ENCODE measurements at regions of chr1 and their contacts with region 1.

Region 1: GRCh38 chr1:154558575-154559465 is at the start of gene UBE2Q1:
- DNase-seq: peak; percentile 97
- H3K4me3 ChIP-seq: peak within 1 kb of the TSS; percentile 54 to 74 (median 68)
- H3K27ac ChIP-seq: peak within 1 kb of the TSS; percentile 70
- H3K4me1 ChIP-seq: peaks cover 18% of the 10 kb centered on the region
- H3K27me3 ChIP-seq: no peaks in the 10 kb centered on the region
- CTCF ChIP-seq: no peak
- total RNA-seq, gene UBE2Q1: 31.2 to 80.1 TPM

Region 2: GRCh38 chr1:154324669-154325582 is 233.9 kb before region 1 on chr1 and contains the start of gene ATP8B2:
- CTCF ChIA-PET with region 1: no interaction called
- dilution Hi-C with region 1: no loop called
- in situ Hi-C with region 1: no loop called
- intact Hi-C with region 1: loop called (anchors 5 kb)
- DNase-seq: peak; percentile 53
- H3K4me3 ChIP-seq: peak within 1 kb of the TSS; percentile 55 to 65 (median 63)
- H3K27ac ChIP-seq: no peak within 1 kb of the TSS
- H3K4me1 ChIP-seq: peaks cover 29% of the 10 kb centered on the region
- H3K27me3 ChIP-seq: no peaks in the 10 kb centered on the region
- CTCF ChIP-seq: peak; percentile 79 to 92
- total RNA-seq, gene ATP8B2: 11.5 TPM

Region 3: DNA sequence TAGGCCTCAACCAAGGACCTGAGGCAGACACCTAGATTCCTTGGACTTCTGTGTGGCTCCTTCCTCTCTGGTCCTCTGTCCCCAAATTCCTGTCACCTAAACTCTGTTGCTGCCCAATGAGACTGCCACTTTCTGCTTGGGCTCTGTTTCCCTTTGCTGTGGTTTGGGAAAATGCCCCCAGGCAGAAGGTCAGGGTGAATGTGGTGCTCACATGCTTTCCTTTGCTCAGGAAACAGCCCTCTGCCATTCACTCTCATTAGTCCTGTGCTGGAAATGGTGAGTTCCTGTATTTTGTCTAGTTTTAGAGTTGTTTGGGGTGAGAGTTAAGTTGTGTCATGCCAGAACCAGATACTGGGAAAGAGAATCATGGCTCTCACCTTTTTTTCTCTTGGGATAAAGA is 33.9 kb before region 1 on chr1:
- CTCF ChIA-PET with region 1: no interaction called
- dilution Hi-C with region 1: no loop called
- in situ Hi-C with region 1: no loop called
- intact Hi-C with region 1: no loop called
- DNase-seq: no peak
- H3K4me3 ChIP-seq: no peak overlapping the region
- H3K27ac ChIP-seq: no peak overlapping the region
- H3K4me1 ChIP-seq: no peaks in the 10 kb centered on the region
- H3K27me3 ChIP-seq: no peaks in the 10 kb centered on the region
- CTCF ChIP-seq: no peak

Region 4: DNA sequence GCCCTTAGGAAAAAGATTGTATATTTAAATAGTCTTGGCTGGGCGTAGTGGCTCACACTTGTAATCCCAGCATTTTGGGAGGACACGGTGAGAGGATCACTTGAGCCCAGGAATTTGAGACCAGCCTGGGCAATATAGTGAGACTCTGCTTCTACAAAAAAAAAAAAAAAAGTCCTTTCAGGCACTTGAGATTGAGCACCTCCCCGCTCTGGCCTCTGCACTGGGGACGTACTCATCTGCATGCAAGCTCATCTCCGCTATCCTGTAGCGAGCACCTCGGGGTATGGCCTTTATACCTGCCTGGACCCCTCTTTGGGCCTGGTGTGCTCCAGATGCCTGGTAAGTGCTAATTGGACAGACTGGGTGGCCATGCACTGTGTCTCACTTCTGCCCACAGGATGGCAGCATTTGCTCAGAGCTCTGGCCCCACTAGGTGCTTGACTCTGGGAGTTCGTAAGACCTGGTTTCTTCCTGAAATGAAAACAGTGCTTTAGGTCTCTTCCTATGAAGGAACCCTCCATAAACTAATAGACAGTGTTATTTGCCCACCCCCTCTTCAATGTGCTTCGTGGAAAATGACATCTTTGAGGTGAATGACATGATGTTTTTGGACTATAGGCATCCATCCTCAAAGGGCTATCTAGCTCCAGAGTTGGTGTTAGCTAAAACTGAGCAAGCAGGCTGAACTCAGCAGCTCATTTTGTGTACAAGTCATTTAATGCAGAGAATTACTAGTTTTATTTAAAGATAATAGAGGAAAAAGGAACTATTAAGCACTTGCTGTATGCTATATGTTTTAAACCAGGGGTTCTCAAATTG is 110.9 kb after region 1 on chr1:
- CTCF ChIA-PET with region 1: interaction called, 3 read pairs
- dilution Hi-C with region 1: no loop called
- in situ Hi-C with region 1: no loop called
- intact Hi-C with region 1: loop called (anchors 1 kb)
- DNase-seq: peak; percentile 57
- H3K4me3 ChIP-seq: no peak overlapping the region
- H3K27ac ChIP-seq: no peak overlapping the region
- H3K4me1 ChIP-seq: no peaks in the 10 kb centered on the region
- H3K27me3 ChIP-seq: no peaks in the 10 kb centered on the region
- CTCF ChIP-seq: peak; percentile 89 to 93

Region 5: DNA sequence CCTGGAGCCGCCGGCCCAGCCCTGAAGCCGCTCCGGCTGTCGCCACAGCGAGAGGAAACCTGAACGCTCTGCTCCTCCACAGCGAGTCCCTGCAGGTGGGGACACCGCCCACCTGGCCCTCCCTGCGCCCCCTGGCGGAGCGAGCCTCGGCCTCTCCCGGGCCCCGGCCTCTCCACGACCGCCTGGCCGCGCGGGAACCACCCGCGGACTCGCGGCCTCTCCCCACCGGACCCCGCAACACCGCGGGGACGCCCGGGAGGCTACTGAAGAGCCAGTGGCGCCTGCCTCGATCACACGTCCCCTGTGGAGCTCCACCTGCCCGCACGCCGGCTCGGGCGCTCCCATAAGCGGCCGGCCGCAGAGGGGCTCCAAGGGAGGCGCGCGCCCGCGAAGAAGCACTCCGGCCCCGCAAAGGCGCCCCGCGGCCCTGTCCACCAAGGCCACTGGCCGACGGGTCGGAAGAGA is 201.7 kb after region 1 on chr1:
- CTCF ChIA-PET with region 1: interaction called, 3 read pairs
- dilution Hi-C with region 1: no loop called
- in situ Hi-C with region 1: no loop called
- intact Hi-C with region 1: loop called (anchors 1 kb)
- DNase-seq: peak; percentile 30
- H3K4me3 ChIP-seq: peak overlapping the region; percentile 32 to 37 (median 33)
- H3K27ac ChIP-seq: no peak overlapping the region
- H3K4me1 ChIP-seq: peaks cover 8% of the 10 kb centered on the region
- H3K27me3 ChIP-seq: no peaks in the 10 kb centered on the region
- CTCF ChIP-seq: peak; percentile 39 to 68

Region 6: GRCh38 chr1:154878371-154879022 is 319.7 kb after region 1 on chr1:
- CTCF ChIA-PET with region 1: no interaction called
- dilution Hi-C with region 1: no loop called
- in situ Hi-C with region 1: no loop called
- intact Hi-C with region 1: loop called (anchors 1 kb)
- DNase-seq: peak; percentile 36
- H3K4me3 ChIP-seq: no peak overlapping the region
- H3K27ac ChIP-seq: no peak overlapping the region
- H3K4me1 ChIP-seq: no peaks in the 10 kb centered on the region
- H3K27me3 ChIP-seq: no peaks in the 10 kb centered on the region
- CTCF ChIP-seq: peak; percentile 78 to 85

Region 7: GRCh38 chr1:154974063-154974807 is 415.4 kb after region 1 on chr1 and contains the start of gene CKS1B:
- CTCF ChIA-PET with region 1: no interaction called
- dilution Hi-C with region 1: no loop called
- in situ Hi-C with region 1: no loop called
- intact Hi-C with region 1: no loop called
- DNase-seq: peak; percentile 100
- H3K4me3 ChIP-seq: peak within 1 kb of the TSS; percentile 69 to 73 (median 70)
- H3K27ac ChIP-seq: peak within 1 kb of the TSS; percentile 98
- H3K4me1 ChIP-seq: peaks cover 27% of the 10 kb centered on the region
- H3K27me3 ChIP-seq: no peaks in the 10 kb centered on the region
- CTCF ChIP-seq: no peak
- total RNA-seq, gene CKS1B: 44.2 to 95.6 TPM

Region 8: DNA sequence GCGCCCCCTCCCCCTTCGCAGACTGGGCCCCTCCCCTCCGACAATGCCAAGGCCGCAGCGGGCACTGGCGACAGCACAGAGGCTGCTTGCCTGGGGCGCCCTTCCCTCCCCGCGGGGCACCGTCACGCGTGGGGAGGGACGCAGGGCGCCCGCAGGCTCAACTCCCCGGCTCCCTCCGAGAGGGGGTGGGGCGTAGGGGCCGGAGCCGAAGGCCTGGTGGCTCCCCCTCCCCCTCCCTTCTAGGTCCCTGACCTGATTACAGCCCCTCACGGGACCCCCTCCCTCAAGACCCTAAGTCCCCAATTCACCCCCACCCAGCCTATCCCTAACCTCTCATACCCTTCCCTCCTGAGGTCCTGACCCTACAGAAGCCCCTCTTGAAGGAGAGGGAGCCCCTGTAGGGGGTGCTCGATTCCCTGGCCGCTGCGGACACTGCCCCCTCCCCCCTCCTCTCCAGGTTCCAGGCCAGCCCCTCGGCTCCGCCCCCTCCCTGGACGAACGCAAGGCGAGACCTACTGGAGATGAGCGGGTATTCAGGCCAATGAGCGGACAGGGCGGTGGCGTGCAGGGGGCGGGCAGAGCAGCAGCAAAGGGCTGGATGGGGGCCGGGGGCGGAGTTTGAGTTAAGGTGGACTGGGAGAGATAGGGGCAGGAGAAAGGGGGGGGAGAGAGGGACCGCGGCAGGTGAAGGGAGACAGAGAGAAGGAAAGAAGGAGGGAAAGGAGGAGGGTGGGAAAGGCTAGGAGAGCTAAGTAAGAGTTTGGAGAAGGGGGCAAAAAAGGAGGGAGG is 443.0 kb after region 1 on chr1:
- CTCF ChIA-PET with region 1: no interaction called
- dilution Hi-C with region 1: no loop called
- in situ Hi-C with region 1: no loop called
- intact Hi-C with region 1: loop called (anchors 5 kb)
- DNase-seq: peak; percentile 99
- H3K4me3 ChIP-seq: peak overlapping the region; percentile 52 to 85 (median 62)
- H3K27ac ChIP-seq: peak overlapping the region; percentile 70
- H3K4me1 ChIP-seq: peaks cover 35% of the 10 kb centered on the region
- H3K27me3 ChIP-seq: no peaks in the 10 kb centered on the region
- CTCF ChIP-seq: peak in 1 of 2 donors; percentile 60